ENCODE measurements at regions of chr3 and their contacts with region 1.

Region 1: GRCh38 chr3:58491506-58492402 is at the start of gene KCTD6:
- DNase-seq: peak; percentile 79 to 91 (median 86)
- H3K4me3 ChIP-seq: peak within 1 kb of the TSS; percentile 31 to 84
- H3K4me3 Mint-ChIP-seq: peak within 1 kb of the TSS; percentile 92 to 97 (median 96)
- H3K27ac ChIP-seq: peak within 1 kb of the TSS; percentile 54
- H3K27ac Mint-ChIP-seq: peak within 1 kb of the TSS; percentile 87 to 98 (median 94)
- H3K4me1 ChIP-seq: peaks cover 52% of the 10 kb centered on the region
- H3K4me1 Mint-ChIP-seq: peaks cover 39 to 78% (median 60%) of the 10 kb centered on the region in 4 donors
- H3K27me3 ChIP-seq: no peaks in the 10 kb centered on the region
- H3K27me3 Mint-ChIP-seq: no peaks in the 10 kb centered on the region
- total RNA-seq, gene KCTD6: 8.9 to 11.6 TPM

Region 2: DNA sequence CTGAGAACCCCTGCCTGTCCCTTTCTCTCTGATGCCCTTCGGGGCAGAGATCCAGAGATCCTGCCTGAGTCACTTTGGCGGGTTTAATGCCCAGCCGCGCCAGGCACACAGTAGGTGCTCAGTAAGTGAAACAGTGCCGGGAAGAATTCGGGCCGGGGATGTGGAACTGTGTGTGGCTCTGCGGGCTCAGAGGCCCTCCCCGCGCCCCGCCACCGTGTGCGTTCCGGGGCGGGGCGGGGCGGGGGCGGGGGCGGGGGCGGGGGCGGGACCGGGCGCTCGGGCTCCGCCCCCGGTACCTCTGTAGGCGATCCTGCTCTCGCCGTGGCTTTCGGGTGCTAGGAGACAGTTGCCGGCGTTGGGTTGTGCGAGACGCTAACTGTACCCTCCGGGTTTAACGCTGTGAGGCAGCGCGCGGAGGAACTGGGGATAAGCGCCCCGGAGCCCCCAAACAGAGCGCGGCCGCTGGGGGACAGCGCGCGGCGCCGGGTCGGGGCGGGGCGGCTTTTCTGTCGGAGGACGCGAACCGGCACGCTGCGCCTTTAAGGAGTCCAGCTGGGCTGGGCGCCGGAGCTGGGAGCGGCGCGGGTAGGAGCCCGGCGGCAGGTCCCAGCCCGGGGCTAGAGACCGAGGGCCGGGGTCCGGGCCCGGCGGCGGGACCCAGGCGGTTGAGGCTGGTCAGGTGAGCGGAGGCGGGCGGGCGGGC is 254.4 kb before region 1 on chr3 and contains the start of gene ABHD6:
- CTCF ChIA-PET with region 1: no interaction called
- POLR2A ChIA-PET with region 1: no interaction called
- intact Hi-C with region 1: loop called (anchors 1 kb)
- DNase-seq: peak; percentile 72 to 93 (median 88)
- H3K4me3 ChIP-seq: peak within 1 kb of the TSS; percentile 58
- H3K4me3 Mint-ChIP-seq: peak within 1 kb of the TSS; percentile 88 to 96 (median 92)
- H3K27ac ChIP-seq: peak within 1 kb of the TSS; percentile 62
- H3K27ac Mint-ChIP-seq: peak within 1 kb of the TSS; percentile 85 to 92 (median 91)
- H3K4me1 ChIP-seq: peaks cover 12% of the 10 kb centered on the region
- H3K4me1 Mint-ChIP-seq: peaks cover 7 to 21% (median 12%) of the 10 kb centered on the region in 4 donors
- H3K27me3 ChIP-seq: no peaks in the 10 kb centered on the region
- H3K27me3 Mint-ChIP-seq: peaks cover 3 to 4% of the 10 kb centered on the region in 2 donors
- total RNA-seq, gene ABHD6: 5.1 to 7.2 TPM

Region 3: DNA sequence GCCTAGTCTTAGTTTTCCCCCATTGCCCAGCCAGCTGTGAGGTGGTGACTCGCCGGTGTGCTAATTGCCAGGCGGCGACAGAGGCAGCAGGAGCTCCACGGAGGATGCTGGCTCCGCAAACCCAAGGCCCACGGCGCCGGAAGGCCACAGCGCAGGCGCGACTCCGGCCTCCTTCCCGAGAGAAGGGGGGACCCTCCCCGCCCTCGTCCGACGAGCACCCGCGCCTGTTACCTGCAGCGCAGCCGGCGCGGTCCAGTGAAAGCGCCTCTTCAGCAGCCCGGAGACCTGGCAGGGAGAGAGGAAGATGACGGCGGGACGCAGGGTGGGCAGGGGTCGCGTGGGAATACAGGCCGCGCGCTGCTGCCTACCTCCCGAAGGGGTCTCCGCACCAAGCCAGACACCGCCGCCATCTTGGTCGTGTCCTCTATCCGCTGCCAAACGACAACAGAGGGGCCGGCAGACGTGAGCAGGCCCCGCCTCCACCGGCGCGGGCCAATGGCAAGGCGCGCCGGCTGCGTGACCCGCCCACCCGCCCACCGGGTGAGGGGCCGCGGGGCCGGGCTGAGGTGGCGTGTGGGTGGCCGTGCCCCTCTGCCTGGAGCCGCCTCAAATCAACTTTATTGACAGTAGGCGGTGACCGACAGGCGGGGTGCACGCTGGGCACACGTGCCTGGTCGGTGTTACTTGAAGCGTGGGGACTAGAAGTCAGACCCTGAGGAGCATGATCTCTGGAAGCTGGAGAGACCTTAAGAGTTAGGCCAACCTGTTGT is 58.2 kb before region 1 on chr3 and contains the start of gene PDHB:
- CTCF ChIA-PET with region 1: interaction called, 12 read pairs
- POLR2A ChIA-PET with region 1: interaction called, 18 read pairs
- intact Hi-C with region 1: loop called (anchors 1 kb)
- DNase-seq: peak; percentile 86 to 91 (median 89)
- H3K4me3 ChIP-seq: peak within 1 kb of the TSS; percentile 69 to 82
- H3K4me3 Mint-ChIP-seq: peak within 1 kb of the TSS; percentile 91 to 94 (median 92)
- H3K27ac ChIP-seq: peak within 1 kb of the TSS; percentile 77
- H3K27ac Mint-ChIP-seq: peak within 1 kb of the TSS; percentile 88 to 98 (median 91)
- H3K4me1 ChIP-seq: peaks cover 25% of the 10 kb centered on the region
- H3K4me1 Mint-ChIP-seq: peaks cover 16 to 36% (median 25%) of the 10 kb centered on the region in 4 donors
- H3K27me3 ChIP-seq: no peaks in the 10 kb centered on the region
- H3K27me3 Mint-ChIP-seq: no peaks in the 10 kb centered on the region
- total RNA-seq, gene PDHB: 55.0 to 58.6 TPM

Region 4: DNA sequence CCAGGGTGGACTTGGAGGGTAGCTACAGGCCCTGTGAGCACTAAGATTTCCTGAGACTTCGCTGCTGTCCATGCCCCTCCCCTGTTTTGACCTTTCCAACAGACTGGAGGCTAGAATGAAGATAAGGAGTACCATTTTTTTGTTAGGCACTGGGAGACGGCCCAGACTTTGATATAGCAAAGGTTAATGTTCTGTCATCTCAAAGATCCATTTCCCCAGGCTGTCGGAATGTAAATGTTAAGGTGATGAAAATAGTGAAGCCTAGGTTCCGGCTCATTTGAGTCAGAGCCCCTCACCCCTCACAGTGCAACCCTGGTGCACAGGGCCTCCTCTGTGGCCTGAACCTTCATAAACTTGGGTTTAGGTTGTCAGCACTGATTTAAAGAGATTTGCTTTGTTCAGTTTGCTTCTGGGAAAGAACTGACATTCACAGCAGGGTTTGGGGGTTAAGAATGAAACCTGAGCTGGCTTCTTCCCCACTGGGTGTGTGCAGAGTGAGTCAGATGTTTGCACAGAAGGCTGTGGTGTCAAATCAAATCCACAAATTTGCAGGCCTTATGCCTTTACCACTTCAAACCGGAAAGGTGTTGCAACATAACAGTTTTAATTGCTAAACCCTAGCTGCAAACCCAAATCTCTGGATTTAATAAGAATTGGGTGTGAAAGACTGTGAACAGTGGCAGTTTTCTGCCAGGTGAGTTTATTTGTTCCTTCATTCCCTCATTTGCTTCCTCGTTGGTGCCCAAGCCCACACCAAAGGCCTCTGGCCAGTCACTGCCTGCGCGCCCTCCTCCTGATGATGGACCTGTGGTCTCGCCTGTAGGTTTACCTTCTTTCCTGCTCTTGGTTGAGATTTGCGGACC is 20.5 kb before region 1 on chr3:
- CTCF ChIA-PET with region 1: interaction called, 44 read pairs
- POLR2A ChIA-PET with region 1: interaction called, 32 read pairs
- intact Hi-C with region 1: loop called (anchors 2 kb)
- DNase-seq: peak; percentile 27 to 60 (median 37)
- H3K4me3 ChIP-seq: peak overlapping the region in 1 of 2 donors; percentile 9
- H3K4me3 Mint-ChIP-seq: peak overlapping the region in 7 of 8 donors; percentile 29 to 61 (median 49)
- H3K27ac ChIP-seq: peak overlapping the region; percentile 24
- H3K27ac Mint-ChIP-seq: peak overlapping the region; percentile 13 to 89 (median 79)
- H3K4me1 ChIP-seq: peaks cover 20% of the 10 kb centered on the region
- H3K4me1 Mint-ChIP-seq: peaks cover 18 to 41% (median 29%) of the 10 kb centered on the region in 4 donors
- H3K27me3 ChIP-seq: no peaks in the 10 kb centered on the region
- H3K27me3 Mint-ChIP-seq: no peaks in the 10 kb centered on the region

Region 5: GRCh38 chr3:58532794-58533220 is 41.1 kb after region 1 on chr3:
- CTCF ChIA-PET with region 1: interaction called, 13 read pairs
- POLR2A ChIA-PET with region 1: no interaction called
- intact Hi-C with region 1: loop called (anchors 1 kb)
- DNase-seq: peak; percentile 71 to 79 (median 75)
- H3K4me3 ChIP-seq: no peak overlapping the region
- H3K4me3 Mint-ChIP-seq: no peak overlapping the region
- H3K27ac ChIP-seq: no peak overlapping the region
- H3K27ac Mint-ChIP-seq: peak overlapping the region in 6 of 7 donors; percentile 16 to 87 (median 69)
- H3K4me1 ChIP-seq: peaks cover 9% of the 10 kb centered on the region
- H3K4me1 Mint-ChIP-seq: peaks cover 4 to 8% (median 7%) of the 10 kb centered on the region in 4 donors
- H3K27me3 ChIP-seq: no peaks in the 10 kb centered on the region
- H3K27me3 Mint-ChIP-seq: no peaks in the 10 kb centered on the region